B cell (primary cell): ENCODE measurements at regions of chr14 and their contacts with region 1.

Region 1: DNA sequence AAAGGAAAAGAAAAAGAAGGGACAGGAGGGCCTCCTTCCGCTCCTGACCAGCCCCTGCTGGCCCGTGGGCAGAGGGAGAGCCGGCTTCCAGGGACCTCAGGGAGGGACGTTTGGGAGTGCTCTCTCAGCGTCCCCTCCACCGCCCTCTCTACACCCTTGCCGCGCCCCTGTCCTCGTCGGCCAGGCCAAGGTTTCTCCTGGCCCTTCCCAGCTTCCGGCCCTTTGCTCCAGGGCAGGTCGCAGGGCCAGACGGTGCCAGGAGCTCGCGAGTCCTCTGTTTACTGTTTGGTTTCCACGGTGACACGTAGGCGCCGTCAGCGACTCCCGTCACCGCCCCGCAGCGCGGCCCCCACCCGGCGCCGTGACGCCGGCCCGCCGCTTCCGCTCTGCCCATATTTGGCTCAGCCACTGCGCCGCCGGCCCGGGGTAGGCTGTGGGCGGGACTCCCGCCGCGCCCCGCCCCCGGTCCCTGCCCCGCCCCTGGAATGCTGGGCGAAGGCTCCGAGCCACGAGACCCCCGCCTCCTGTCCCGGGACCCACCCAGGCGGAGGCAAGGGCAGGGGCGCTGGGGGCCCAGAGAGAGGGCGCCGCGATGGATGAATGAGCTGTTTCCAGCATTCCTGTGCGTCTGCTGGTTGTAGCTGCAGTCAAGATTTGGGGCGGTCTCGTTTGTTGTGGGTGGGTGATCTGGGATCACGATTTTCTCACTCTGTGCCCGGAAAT is 15.5 kb downstream of the FOS start:
- DNase-seq: peak; percentile 98
- ATAC-seq: peak; percentile 88
- H3K4me3 ChIP-seq: peak overlapping the region; percentile 71 to 88 (median 74)
- H3K4me3 Mint-ChIP-seq: peak overlapping the region; percentile 95
- H3K27ac ChIP-seq: peak overlapping the region; percentile 95 to 99
- H3K27ac Mint-ChIP-seq: peak overlapping the region; percentile 97
- H3K4me1 ChIP-seq: peaks cover 18 to 28% of the 10 kb centered on the region in 2 donors
- H3K4me1 Mint-ChIP-seq: peaks cover 22% of the 10 kb centered on the region
- H3K27me3 ChIP-seq: peaks cover 0 to 4% (median 0%) of the 10 kb centered on the region in 4 experiments
- H3K27me3 Mint-ChIP-seq: peaks cover 8% of the 10 kb centered on the region
- CTCF ChIP-seq: no peak

Region 2: DNA sequence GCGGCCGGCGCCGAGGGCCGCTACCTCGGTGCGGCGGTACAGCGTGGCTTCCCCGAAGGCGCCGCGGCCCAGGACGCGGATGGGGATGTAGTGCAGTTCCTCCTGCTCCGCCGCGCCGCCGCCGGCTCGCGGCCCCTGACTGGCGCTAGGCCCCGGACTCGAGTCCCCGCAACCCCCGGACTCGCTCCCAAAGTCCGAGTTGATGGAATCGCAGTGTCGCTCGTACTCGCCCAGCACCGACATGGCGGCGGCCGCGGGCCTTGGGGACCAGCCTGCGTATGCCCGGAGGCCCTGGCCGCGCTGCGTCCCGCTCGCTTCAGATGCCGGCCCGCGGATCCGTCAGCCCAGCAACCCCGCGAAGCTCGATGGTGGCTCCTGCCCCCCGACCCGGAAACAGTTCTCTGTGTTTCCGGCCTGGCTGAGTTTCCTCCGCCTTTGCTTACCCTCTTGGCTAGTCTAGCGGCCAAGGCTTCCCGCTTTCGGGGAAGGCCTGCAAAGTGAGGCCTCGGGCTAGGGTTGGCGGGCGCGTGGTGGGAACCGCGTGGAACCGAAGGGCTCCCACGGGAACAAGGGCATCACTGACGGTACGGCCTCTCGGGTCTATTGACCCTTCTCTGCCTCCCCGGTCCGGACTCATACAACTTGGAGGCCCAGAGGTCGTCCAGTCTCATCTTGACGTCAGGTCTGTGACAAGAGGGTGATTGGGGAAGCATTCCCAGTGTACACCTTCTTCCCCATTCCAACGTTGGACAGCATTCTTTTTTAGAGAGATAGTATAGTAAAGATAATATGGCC is 167.2 kb before region 1 on chr14 and contains the start of gene NEK9:
- CTCF ChIA-PET with region 1: interaction called, 321 read pairs
- POLR2A ChIA-PET with region 1: interaction called, 8 read pairs
- intact Hi-C with region 1: loop called (anchors 1 kb)
- DNase-seq: peak; percentile 94
- ATAC-seq: peak; percentile 84
- H3K4me3 ChIP-seq: peak within 1 kb of the TSS; percentile 67 to 88 (median 73)
- H3K4me3 Mint-ChIP-seq: peak within 1 kb of the TSS; percentile 99
- H3K27ac ChIP-seq: peak within 1 kb of the TSS; percentile 82 to 94
- H3K27ac Mint-ChIP-seq: peak within 1 kb of the TSS; percentile 99
- H3K4me1 ChIP-seq: peaks cover 17 to 21% of the 10 kb centered on the region in 2 donors
- H3K4me1 Mint-ChIP-seq: peaks cover 36% of the 10 kb centered on the region
- H3K27me3 ChIP-seq: no peaks in the 10 kb centered on the region
- H3K27me3 Mint-ChIP-seq: no peaks in the 10 kb centered on the region
- CTCF ChIP-seq: no peak
- total RNA-seq, gene NEK9: 110 and 116 TPM in 2 replicates

Region 3: DNA sequence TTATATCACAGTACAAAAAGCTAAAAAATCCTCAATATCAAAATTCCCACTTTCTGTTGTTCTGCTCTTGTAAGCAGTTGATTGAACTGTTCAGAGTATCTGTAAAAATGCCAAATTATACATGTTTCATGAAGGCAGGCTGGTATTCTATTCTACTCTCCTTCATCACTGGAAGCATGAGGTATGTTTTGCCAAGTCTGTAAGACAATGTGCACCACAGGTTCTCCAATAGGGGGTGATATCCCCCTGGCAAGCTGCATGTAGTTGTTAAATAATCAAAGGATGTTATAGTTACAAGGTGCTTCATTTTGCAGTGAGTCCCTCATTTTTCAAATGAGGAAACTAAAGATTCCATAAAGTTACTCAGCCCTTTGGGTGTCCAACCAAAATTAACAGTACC is 152.1 kb before region 1 on chr14:
- CTCF ChIA-PET with region 1: interaction called, 266 read pairs
- POLR2A ChIA-PET with region 1: interaction called, 7 read pairs
- intact Hi-C with region 1: no loop called
- DNase-seq: peak; percentile 43
- ATAC-seq: no peak
- H3K4me3 ChIP-seq: no peak overlapping the region
- H3K4me3 Mint-ChIP-seq: no peak overlapping the region
- H3K27ac ChIP-seq: peak overlapping the region in 1 of 2 donors; percentile 56
- H3K27ac Mint-ChIP-seq: peak overlapping the region; percentile 23
- H3K4me1 ChIP-seq: peaks cover 33 to 45% of the 10 kb centered on the region in 2 donors
- H3K4me1 Mint-ChIP-seq: peaks cover 49% of the 10 kb centered on the region
- H3K27me3 ChIP-seq: no peaks in the 10 kb centered on the region
- H3K27me3 Mint-ChIP-seq: no peaks in the 10 kb centered on the region
- CTCF ChIP-seq: peak; percentile 45

Region 4: GRCh38 chr14:75188520-75189268 is 105.4 kb before region 1 on chr14:
- CTCF ChIA-PET with region 1: interaction called, 15 read pairs
- POLR2A ChIA-PET with region 1: interaction called, 3 read pairs
- intact Hi-C with region 1: no loop called
- DNase-seq: peak; percentile 90
- ATAC-seq: peak; percentile 78
- H3K4me3 ChIP-seq: no peak overlapping the region
- H3K4me3 Mint-ChIP-seq: peak overlapping the region; percentile 47
- H3K27ac ChIP-seq: peak overlapping the region in 1 of 2 donors; percentile 21
- H3K27ac Mint-ChIP-seq: peak overlapping the region; percentile 47
- H3K4me1 ChIP-seq: peaks cover 18 to 25% of the 10 kb centered on the region in 2 donors
- H3K4me1 Mint-ChIP-seq: peaks cover 25% of the 10 kb centered on the region
- H3K27me3 ChIP-seq: no peaks in the 10 kb centered on the region
- H3K27me3 Mint-ChIP-seq: no peaks in the 10 kb centered on the region
- CTCF ChIP-seq: peak; percentile 10

Region 5: GRCh38 chr14:75202657-75203056 is 91.4 kb before region 1 on chr14:
- CTCF ChIA-PET with region 1: no interaction called
- POLR2A ChIA-PET with region 1: no interaction called
- intact Hi-C with region 1: no loop called
- DNase-seq: no peak
- ATAC-seq: no peak
- H3K4me3 ChIP-seq: no peak overlapping the region
- H3K4me3 Mint-ChIP-seq: no peak overlapping the region
- H3K27ac ChIP-seq: no peak overlapping the region
- H3K27ac Mint-ChIP-seq: no peak overlapping the region
- H3K4me1 ChIP-seq: no peaks in the 10 kb centered on the region
- H3K4me1 Mint-ChIP-seq: no peaks in the 10 kb centered on the region
- H3K27me3 ChIP-seq: no peaks in the 10 kb centered on the region
- H3K27me3 Mint-ChIP-seq: no peaks in the 10 kb centered on the region
- CTCF ChIP-seq: no peak

Region 6: GRCh38 chr14:75258615-75259466 is 35.2 kb before region 1 on chr14:
- CTCF ChIA-PET with region 1: interaction called, 40 read pairs
- POLR2A ChIA-PET with region 1: interaction called, 19 read pairs
- intact Hi-C with region 1: loop called (anchors 1 kb)
- DNase-seq: peak; percentile 100
- ATAC-seq: peak; percentile 86
- H3K4me3 ChIP-seq: peak overlapping the region; percentile 60 to 72 (median 67)
- H3K4me3 Mint-ChIP-seq: peak overlapping the region; percentile 98
- H3K27ac ChIP-seq: peak overlapping the region; percentile 97 to 99
- H3K27ac Mint-ChIP-seq: peak overlapping the region; percentile 100
- H3K4me1 ChIP-seq: peaks cover 14 to 18% of the 10 kb centered on the region in 2 donors
- H3K4me1 Mint-ChIP-seq: peaks cover 29% of the 10 kb centered on the region
- H3K27me3 ChIP-seq: no peaks in the 10 kb centered on the region
- H3K27me3 Mint-ChIP-seq: peaks cover 3% of the 10 kb centered on the region
- CTCF ChIP-seq: no peak

Region 7: GRCh38 chr14:75307700-75308379 is 13.8 kb after region 1 on chr14:
- CTCF ChIA-PET with region 1: interaction called, 24 read pairs
- POLR2A ChIA-PET with region 1: no interaction called
- intact Hi-C with region 1: no loop called
- DNase-seq: peak; percentile 79
- ATAC-seq: peak; percentile 59
- H3K4me3 ChIP-seq: no peak overlapping the region
- H3K4me3 Mint-ChIP-seq: peak overlapping the region; percentile 13
- H3K27ac ChIP-seq: no peak overlapping the region
- H3K27ac Mint-ChIP-seq: no peak overlapping the region
- H3K4me1 ChIP-seq: peaks cover 3 to 18% of the 10 kb centered on the region in 2 donors
- H3K4me1 Mint-ChIP-seq: peaks cover 15% of the 10 kb centered on the region
- H3K27me3 ChIP-seq: no peaks in the 10 kb centered on the region
- H3K27me3 Mint-ChIP-seq: no peaks in the 10 kb centered on the region
- CTCF ChIP-seq: peak; percentile 80